ENCODE measurements at regions of chr17 and their contacts with region 1.

Region 1: GRCh38 chr17:57861000-57861789 is 11.4 kb upstream of the MRPS23 start:
- DNase-seq: peak; percentile 63 to 89
- H3K4me3 ChIP-seq: peak overlapping the region; percentile 52
- H3K27ac ChIP-seq: no peak overlapping the region
- H3K4me1 ChIP-seq: peaks cover 18% of the 10 kb centered on the region
- H3K27me3 ChIP-seq: no peaks in the 10 kb centered on the region
- CTCF ChIP-seq: no peak

Region 2: GRCh38 chr17:57849874-57850754 is 11.1 kb before region 1 on chr17 and contains the start of gene MRPS23:
- CTCF ChIA-PET with region 1: no interaction called
- POLR2A ChIA-PET with region 1: no interaction called
- intact Hi-C with region 1: no loop called
- DNase-seq: peak; percentile 95 to 98
- H3K4me3 ChIP-seq: peak within 1 kb of the TSS; percentile 72
- H3K27ac ChIP-seq: peak within 1 kb of the TSS; percentile 56
- H3K4me1 ChIP-seq: peaks cover 24% of the 10 kb centered on the region
- H3K27me3 ChIP-seq: no peaks in the 10 kb centered on the region
- CTCF ChIP-seq: no peak
- total RNA-seq, gene MRPS23: 49.7 and 50.3 TPM in 2 replicates

Region 3: GRCh38 chr17:57892829-57893595 is 31.8 kb after region 1 on chr17:
- CTCF ChIA-PET with region 1: interaction called, 3 read pairs
- POLR2A ChIA-PET with region 1: interaction called, 4 read pairs
- intact Hi-C with region 1: loop called (anchors 1 kb)
- DNase-seq: peak; percentile 92 to 99
- H3K4me3 ChIP-seq: peak overlapping the region; percentile 41; the same call in 1 of the 2 replicates
- H3K27ac ChIP-seq: peak overlapping the region; percentile 90
- H3K4me1 ChIP-seq: peaks cover 38% of the 10 kb centered on the region
- H3K27me3 ChIP-seq: no peaks in the 10 kb centered on the region
- CTCF ChIP-seq: peak; percentile 58; the same call in 1 of the 2 replicates

Region 4: DNA sequence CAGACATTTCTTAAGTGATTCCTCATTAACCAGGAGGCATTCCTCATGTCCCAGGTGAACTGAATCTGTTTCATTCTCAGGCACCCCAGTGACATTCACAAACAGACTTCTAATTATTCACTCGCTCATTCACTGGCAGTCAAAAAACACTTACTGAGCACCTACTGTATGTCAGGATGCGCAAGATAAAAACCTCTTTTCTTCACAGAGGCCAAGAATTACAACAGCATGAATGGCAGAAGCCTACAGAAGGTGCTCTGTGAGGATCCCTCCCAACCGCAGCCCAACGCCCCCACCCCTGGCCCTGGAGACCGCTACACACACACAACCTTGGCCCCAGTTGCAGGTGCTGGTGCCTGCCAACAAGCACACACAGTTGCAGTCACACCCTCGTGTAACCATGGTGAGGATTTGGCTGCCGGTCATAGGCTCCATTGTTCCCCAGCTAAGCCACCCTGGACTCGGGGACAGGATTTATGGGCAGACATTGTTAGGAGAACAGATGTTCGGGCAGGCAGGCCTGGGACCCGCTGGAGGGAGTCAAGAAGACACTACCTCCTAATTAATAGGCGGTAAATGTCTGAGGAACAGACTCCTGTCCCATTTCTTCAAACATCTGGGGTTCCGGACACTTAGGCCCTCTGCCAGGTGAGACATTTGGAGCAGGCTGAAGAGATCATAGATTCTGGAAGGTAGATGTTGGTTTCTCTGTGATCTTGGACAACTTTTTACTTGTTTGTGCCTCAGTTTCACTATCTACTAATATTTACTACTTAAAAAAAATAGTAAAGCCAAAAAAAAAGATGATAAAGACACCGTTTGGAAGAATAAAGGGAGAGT is 50.9 kb after region 1 on chr17:
- CTCF ChIA-PET with region 1: no interaction called
- POLR2A ChIA-PET with region 1: interaction called, 41 read pairs
- intact Hi-C with region 1: no loop called
- DNase-seq: peak; percentile 73 to 84
- H3K4me3 ChIP-seq: no peak overlapping the region
- H3K27ac ChIP-seq: no peak overlapping the region
- H3K4me1 ChIP-seq: peaks cover 27% of the 10 kb centered on the region
- H3K27me3 ChIP-seq: no peaks in the 10 kb centered on the region
- CTCF ChIP-seq: no peak

Region 5: GRCh38 chr17:57982452-57983170 is 121.4 kb after region 1 on chr17:
- CTCF ChIA-PET with region 1: interaction called, 4 read pairs
- POLR2A ChIA-PET with region 1: interaction called, 24 read pairs
- intact Hi-C with region 1: no loop called
- DNase-seq: peak in 1 of 2 experiments; percentile 19
- H3K4me3 ChIP-seq: no peak overlapping the region
- H3K27ac ChIP-seq: no peak overlapping the region
- H3K4me1 ChIP-seq: peaks cover 29% of the 10 kb centered on the region
- H3K27me3 ChIP-seq: no peaks in the 10 kb centered on the region
- CTCF ChIP-seq: no peak